PC-3 (cell line): ENCODE measurements at regions of chr3 and their contacts with region 1.

Region 1: GRCh38 chr3:66138336-66139313 is 82.2 kb upstream of the SLC25A26 start:
- DNase-seq: peak; percentile 68
- ATAC-seq: peak; percentile 81
- H3K4me3 ChIP-seq: no peak overlapping the region
- H3K27ac ChIP-seq: no peak overlapping the region
- H3K4me1 ChIP-seq: peaks cover 2% of the 10 kb centered on the region
- H3K27me3 ChIP-seq: no peaks in the 10 kb centered on the region
- CTCF ChIP-seq: peak; percentile 66

Region 2: GRCh38 chr3:65806600-65806999 is 332.0 kb before region 1 on chr3:
- CTCF ChIA-PET with region 1: no interaction called
- POLR2A ChIA-PET with region 1: no interaction called
- intact Hi-C with region 1: loop called (anchors 1 kb)
- DNase-seq: no peak
- ATAC-seq: no peak
- H3K4me3 ChIP-seq: no peak overlapping the region
- H3K27ac ChIP-seq: no peak overlapping the region
- H3K4me1 ChIP-seq: peaks cover 4% of the 10 kb centered on the region; the same call in 1 of the 2 replicates
- H3K27me3 ChIP-seq: no peaks in the 10 kb centered on the region
- CTCF ChIP-seq: peak; percentile 25; the same call in 1 of the 2 replicates

Region 3: GRCh38 chr3:65979731-65980130 is 158.9 kb before region 1 on chr3:
- CTCF ChIA-PET with region 1: interaction called, 11 read pairs
- POLR2A ChIA-PET with region 1: no interaction called
- intact Hi-C with region 1: no loop called
- DNase-seq: no peak
- ATAC-seq: no peak
- H3K4me3 ChIP-seq: no peak overlapping the region
- H3K27ac ChIP-seq: no peak overlapping the region
- H3K4me1 ChIP-seq: no peaks in the 10 kb centered on the region
- H3K27me3 ChIP-seq: no peaks in the 10 kb centered on the region
- CTCF ChIP-seq: no peak

Region 4: GRCh38 chr3:66038726-66039589 is 99.7 kb before region 1 on chr3 and contains the start of gene MAGI1:
- CTCF ChIA-PET with region 1: no interaction called
- POLR2A ChIA-PET with region 1: no interaction called
- intact Hi-C with region 1: loop called (anchors 1 kb)
- DNase-seq: peak; percentile 85
- ATAC-seq: peak; percentile 83
- H3K4me3 ChIP-seq: peak within 1 kb of the TSS; percentile 84
- H3K27ac ChIP-seq: peak within 1 kb of the TSS; percentile 67
- H3K4me1 ChIP-seq: peaks cover 6% of the 10 kb centered on the region; the same call in 1 of the 2 replicates
- H3K27me3 ChIP-seq: no peaks in the 10 kb centered on the region
- CTCF ChIP-seq: no peak
- total RNA-seq, gene MAGI1: 8.9 and 12.7 TPM in 2 replicates

Region 5: DNA sequence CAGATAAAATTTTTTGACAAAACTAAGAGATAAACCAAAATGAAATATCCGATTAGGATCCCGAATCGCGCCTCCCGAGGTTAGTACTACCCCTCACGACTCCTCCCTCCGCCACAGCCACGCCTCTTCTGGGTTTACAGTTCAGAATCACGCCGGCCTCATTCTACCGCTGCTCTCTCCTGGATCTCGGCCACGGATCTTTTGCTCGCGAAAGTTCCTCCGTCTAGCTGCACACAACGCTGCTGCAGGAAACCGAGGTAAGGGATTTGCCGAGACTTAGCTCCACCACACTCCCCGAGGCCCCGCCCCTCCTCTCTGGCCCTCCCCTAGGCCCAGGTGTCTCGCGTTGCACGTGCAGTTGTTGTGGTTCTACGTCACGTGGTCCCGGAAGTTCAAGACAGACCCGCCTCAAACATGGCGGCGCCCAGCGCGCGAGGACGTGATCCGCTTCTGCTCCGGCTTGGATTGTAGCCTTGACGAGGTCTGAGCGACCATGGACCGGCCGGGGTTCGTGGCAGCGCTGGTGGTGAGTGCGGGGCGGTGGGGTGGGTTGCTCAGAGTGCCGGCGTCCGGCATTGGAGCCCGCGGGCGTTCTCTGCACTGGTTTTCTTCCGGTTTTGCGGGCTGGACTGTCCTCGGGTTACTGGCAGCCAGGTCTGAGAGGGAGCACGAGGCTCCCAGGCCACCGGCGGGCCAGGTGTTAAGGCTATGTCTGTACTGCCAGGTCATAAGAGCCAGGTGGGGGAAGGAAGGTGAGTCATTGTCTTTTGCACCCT is 82.2 kb after region 1 on chr3 and contains the start of gene SLC25A26:
- CTCF ChIA-PET with region 1: no interaction called
- POLR2A ChIA-PET with region 1: no interaction called
- intact Hi-C with region 1: no loop called
- DNase-seq: peak; percentile 84
- ATAC-seq: peak; percentile 97
- H3K4me3 ChIP-seq: peak within 1 kb of the TSS; percentile 69
- H3K27ac ChIP-seq: peak within 1 kb of the TSS; percentile 47; the same call in 1 of the 2 replicates
- H3K4me1 ChIP-seq: peaks cover 4% of the 10 kb centered on the region; the same call in 1 of the 2 replicates
- H3K27me3 ChIP-seq: no peaks in the 10 kb centered on the region
- CTCF ChIP-seq: no peak
- total RNA-seq, gene SLC25A26: 7.7 and 7.9 TPM in 2 replicates